Heart left ventricle (tissue), 16 donors: ENCODE measurements at regions of chr22 and their contacts with region 1.

Region 1: DNA sequence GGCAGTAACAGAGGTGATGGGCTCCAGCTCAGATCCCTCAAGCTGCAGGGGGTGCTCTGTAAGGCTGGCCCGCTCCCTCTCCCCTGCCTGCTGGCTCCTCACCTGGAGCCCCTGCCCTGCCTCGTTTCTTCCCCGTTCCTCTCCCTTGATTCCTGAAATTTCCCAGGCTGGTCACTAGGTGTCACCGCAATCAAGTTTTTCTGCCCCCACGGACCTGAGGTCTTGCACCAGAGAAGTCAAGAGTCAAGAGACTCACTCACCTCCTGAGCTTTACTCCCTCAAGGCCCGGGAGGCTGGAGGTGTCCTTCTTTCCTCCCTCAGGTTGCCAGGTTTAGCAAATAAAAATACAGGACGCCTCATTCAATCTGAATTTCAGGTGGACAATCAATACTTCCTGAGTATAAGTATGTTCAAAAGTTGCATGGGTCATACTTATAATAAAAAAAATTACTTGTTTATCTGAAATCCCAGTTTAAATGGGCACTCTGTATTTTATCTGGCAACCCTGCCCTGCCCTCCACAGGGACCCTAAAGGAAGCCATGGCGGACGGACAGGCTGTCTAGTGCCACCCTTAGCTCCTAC is 69.2 kb downstream of the SCUBE1 start:
- DNase-seq: peak in 2 of 5 donors; percentile 30 to 43
- ATAC-seq: peak; percentile 32 to 74 (median 58)
- H3K4me3 ChIP-seq: no peak overlapping the region
- H3K27ac ChIP-seq: no peak overlapping the region
- H3K4me1 ChIP-seq: no peaks in the 10 kb centered on the region
- H3K27me3 ChIP-seq: peaks cover 0 to 26% (median 0%) of the 10 kb centered on the region in 9 donors
- CTCF ChIP-seq: peak; percentile 45 to 81 (median 70)
- POLR2A ChIP-seq: no peak

Region 2: GRCh38 chr22:43230971-43231723 is 42.8 kb before region 1 on chr22:
- intact Hi-C with region 1: loop called in 2 of 10 experiments (anchors 5 kb)
- DNase-seq: peak; percentile 43 to 78 (median 50)
- ATAC-seq: peak in 3 of 4 donors; percentile 18 to 39 (median 29)
- H3K4me3 ChIP-seq: no peak overlapping the region
- H3K27ac ChIP-seq: no peak overlapping the region
- H3K4me1 ChIP-seq: peaks cover 0 to 13% (median 1%) of the 10 kb centered on the region in 12 donors
- H3K27me3 ChIP-seq: peaks cover 0 to 10% (median 0%) of the 10 kb centered on the region in 9 donors
- CTCF ChIP-seq: peak; percentile 80 to 95 (median 90)
- POLR2A ChIP-seq: no peak

Region 3: DNA sequence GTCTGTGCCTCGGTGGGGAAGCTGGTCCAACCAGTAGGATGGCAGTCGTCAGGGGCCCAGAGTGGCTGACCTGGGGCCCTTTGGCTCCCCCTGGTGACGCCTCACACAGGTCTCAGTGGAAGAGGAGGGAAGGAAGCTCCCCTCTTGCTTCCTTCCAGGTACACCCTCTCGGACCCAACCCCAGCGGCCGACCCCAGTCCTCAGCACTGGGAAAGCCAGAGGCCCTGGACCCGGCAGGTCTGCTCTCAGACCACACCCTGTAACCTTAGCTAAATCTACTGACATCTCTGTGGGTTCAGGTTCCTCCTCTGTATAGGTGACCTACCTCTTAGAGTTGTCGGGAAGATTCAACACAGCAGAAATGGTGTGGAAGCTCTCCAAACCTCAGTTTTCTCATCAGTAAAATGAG is 72.5 kb after region 1 on chr22:
- intact Hi-C with region 1: loop called (anchors 1 to 2 kb)
- DNase-seq: peak in 4 of 5 donors; percentile 41 to 80 (median 60)
- ATAC-seq: peak; percentile 65 to 85 (median 71)
- H3K4me3 ChIP-seq: no peak overlapping the region
- H3K27ac ChIP-seq: no peak overlapping the region
- H3K4me1 ChIP-seq: peaks cover 0 to 21% (median 0%) of the 10 kb centered on the region in 12 donors
- H3K27me3 ChIP-seq: peaks cover 22 to 80% (median 43%) of the 10 kb centered on the region in 9 donors
- CTCF ChIP-seq: peak; percentile 61 to 88 (median 72)
- POLR2A ChIP-seq: no peak

Region 4: DNA sequence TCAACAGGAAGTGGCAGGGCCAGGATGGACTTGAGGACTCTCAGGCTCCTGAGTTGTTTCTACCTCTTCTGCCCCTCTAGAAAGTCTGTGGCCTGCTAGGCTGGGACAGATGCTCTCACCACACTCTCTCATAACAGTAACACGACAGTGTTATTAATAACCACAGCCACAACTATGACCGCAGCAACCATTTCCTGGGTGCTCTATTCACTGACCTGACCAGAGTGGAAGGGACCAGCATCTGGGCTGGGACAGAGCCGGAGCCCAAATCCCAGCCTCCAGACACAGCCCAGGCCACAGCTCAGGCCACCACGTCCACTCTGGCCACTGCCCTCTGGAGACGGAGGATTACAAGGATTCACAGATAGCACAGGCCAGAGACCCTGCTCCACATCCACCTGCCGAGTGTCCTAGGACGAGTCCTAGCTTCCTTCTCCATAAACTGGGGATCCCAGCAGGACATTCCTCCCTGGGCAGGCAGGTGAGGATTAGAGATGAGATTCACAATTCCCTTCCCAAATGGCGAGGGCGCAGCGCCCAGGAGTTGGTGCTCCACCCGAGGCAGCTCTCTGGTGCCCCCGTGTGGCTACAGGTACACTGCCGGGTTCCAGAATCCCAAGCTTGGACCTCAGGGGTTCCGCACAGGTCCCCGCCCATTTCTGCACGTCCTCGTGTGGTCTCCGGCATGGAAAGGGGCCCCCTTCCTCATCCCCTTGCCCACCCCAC is 610.8 kb after region 1 on chr22:
- intact Hi-C with region 1: loop called in 1 of 10 experiments (anchors 10 kb)
- DNase-seq: peak; percentile 35 to 78 (median 58)
- ATAC-seq: peak in 3 of 4 donors; percentile 54 to 62 (median 59)
- H3K4me3 ChIP-seq: no peak overlapping the region
- H3K27ac ChIP-seq: no peak overlapping the region
- H3K4me1 ChIP-seq: no peaks in the 10 kb centered on the region
- H3K27me3 ChIP-seq: peaks cover 2 to 51% (median 13%) of the 10 kb centered on the region in 9 donors
- CTCF ChIP-seq: peak; percentile 54 to 83 (median 76)
- POLR2A ChIP-seq: no peak